CD8-positive, alpha-beta T cell (primary cell): ENCODE measurements at regions of chr16 and their contacts with region 1.

Region 1: DNA sequence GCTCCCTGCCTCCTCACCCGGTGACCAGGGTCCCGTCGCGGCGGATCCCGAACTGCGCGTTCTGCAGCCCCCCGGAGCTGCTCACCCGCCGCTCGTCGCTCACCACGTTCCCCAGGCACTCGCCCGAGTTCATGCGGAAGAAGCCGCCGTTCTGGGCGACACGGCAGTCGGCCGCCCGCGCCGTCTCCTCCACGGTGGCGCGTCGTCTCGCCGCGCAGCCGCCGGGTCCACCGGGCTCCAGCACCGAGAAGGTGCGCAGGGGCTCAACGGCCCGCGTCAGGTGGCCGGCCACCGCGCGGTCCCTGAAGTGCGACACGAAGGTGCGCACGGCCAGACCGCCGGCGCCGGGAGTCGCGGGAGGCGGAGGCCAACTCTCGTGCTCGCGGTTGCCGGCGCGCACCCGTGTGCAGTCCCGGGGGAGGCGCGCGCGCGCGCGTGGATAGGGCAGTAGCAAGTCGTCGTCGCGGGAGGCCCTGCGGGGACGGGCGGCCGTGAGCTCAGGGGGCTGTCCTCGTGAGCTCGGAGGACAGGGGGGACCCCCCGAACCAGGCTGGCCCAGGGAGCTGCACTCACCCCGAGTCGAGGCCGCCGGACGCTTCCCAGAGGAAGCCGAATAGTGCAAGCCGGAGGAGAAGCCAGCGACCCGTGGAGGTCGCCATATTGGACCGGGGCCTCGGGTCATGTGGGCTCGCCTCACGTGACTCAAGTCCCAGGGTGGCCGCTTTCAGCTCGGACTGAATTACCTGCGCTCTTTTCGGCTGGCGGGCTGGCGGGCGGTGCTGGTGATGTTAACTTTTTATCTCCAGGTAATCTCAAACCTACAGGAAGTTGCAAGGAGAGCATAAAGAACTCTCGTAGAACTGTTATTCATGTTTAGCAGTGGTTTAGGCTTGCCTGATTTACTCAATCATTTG is at the start of gene NAGPA:
- DNase-seq: peak; percentile 62 to 89 (median 84)
- ATAC-seq: peak; percentile 86
- H3K4me3 ChIP-seq: peak within 1 kb of the TSS; percentile 73 to 91
- H3K4me3 Mint-ChIP-seq: peak within 1 kb of the TSS; percentile 88
- H3K27ac ChIP-seq: peak within 1 kb of the TSS; percentile 67 to 79
- H3K27ac Mint-ChIP-seq: peak within 1 kb of the TSS; percentile 94
- H3K4me1 ChIP-seq: peaks cover 17% of the 10 kb centered on the region
- H3K4me1 Mint-ChIP-seq: peaks cover 22% of the 10 kb centered on the region
- H3K27me3 ChIP-seq: no peaks in the 10 kb centered on the region
- H3K27me3 Mint-ChIP-seq: no peaks in the 10 kb centered on the region
- CTCF ChIP-seq: no peak
- total RNA-seq, gene NAGPA: 35.0 to 38.1 TPM

Region 2: GRCh38 chr16:5071681-5072333 is 38.3 kb after region 1 on chr16 and contains the start of gene ALG1:
- CTCF ChIA-PET with region 1: no interaction called
- POLR2A ChIA-PET with region 1: interaction called, 23 read pairs
- intact Hi-C with region 1: loop called (anchors 1 kb)
- DNase-seq: peak; percentile 77 to 95 (median 91)
- ATAC-seq: peak; percentile 89
- H3K4me3 ChIP-seq: peak within 1 kb of the TSS; percentile 73
- H3K4me3 Mint-ChIP-seq: peak within 1 kb of the TSS; percentile 95
- H3K27ac ChIP-seq: peak within 1 kb of the TSS; percentile 74 to 91
- H3K27ac Mint-ChIP-seq: peak within 1 kb of the TSS; percentile 98
- H3K4me1 ChIP-seq: peaks cover 20% of the 10 kb centered on the region
- H3K4me1 Mint-ChIP-seq: peaks cover 27% of the 10 kb centered on the region
- H3K27me3 ChIP-seq: no peaks in the 10 kb centered on the region
- H3K27me3 Mint-ChIP-seq: no peaks in the 10 kb centered on the region
- CTCF ChIP-seq: no peak
- total RNA-seq, gene ALG1: 7.9 to 10.9 TPM